H1 (cell line): ENCODE measurements at regions of chr17 and their contacts with region 1.

Region 1: DNA sequence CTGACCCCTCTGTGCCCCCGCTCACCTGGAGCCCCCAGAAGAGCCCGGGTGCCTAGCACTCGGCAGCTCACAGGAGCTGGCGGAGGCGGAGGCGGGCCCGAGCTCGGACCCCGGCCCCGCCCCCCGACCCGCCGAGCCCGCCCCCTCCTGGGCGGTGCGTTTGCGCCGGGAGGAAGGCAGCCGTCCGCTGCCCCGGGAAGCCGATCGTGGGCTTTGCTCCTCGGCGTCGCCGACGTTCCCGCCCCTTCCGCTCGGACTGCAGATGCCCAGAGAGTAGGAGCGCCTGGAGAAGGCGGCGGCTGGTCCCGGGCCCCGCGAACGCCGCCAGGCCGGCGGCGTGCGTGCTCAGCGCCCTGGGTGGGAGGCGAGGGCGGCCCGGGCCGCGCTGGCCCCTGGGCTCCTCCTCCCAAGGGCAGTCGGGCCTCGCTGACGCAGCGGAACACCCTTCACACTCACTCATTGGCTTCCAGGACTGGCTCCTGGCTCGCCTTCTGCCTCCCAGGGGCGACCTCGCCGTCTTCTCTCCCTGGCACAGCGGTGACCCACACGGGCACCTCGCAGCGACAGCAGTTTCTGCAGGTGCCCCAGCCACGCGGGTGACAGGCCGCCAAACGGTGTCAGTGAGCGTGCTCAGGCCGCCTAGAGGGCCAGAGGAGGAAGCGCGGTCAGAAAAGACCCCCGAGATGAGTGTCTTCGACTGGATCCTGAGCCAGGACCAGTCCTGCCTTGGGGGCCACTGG is at the start of gene PLSCR3:
- DNase-seq: peak in 1 of 2 experiments; percentile 93
- H3K4me3 ChIP-seq: peak within 1 kb of the TSS; percentile 69 to 83 (median 72)
- H3K27ac ChIP-seq: no peak within 1 kb of the TSS
- H3K4me1 ChIP-seq: peaks cover 0 to 9% (median 3%) of the 10 kb centered on the region in 4 experiments; a peak in 6 of 7 replicates
- H3K27me3 ChIP-seq: no peaks in the 10 kb centered on the region
- CTCF ChIP-seq: peak; percentile 40 to 57 (median 52)
- EP300 ChIP-seq: no peak
- POLR2A ChIP-seq: peak in 1 of 2 experiments; percentile 62; a peak in 1 of 3 replicates
- RAD21 ChIP-seq: 0 out of 4 replicates have a peak, but pooled peaks have one; percentile 11 to 26
- total RNA-seq, gene PLSCR3: 35.7 and 38.7 TPM in 2 replicates

Region 2: DNA sequence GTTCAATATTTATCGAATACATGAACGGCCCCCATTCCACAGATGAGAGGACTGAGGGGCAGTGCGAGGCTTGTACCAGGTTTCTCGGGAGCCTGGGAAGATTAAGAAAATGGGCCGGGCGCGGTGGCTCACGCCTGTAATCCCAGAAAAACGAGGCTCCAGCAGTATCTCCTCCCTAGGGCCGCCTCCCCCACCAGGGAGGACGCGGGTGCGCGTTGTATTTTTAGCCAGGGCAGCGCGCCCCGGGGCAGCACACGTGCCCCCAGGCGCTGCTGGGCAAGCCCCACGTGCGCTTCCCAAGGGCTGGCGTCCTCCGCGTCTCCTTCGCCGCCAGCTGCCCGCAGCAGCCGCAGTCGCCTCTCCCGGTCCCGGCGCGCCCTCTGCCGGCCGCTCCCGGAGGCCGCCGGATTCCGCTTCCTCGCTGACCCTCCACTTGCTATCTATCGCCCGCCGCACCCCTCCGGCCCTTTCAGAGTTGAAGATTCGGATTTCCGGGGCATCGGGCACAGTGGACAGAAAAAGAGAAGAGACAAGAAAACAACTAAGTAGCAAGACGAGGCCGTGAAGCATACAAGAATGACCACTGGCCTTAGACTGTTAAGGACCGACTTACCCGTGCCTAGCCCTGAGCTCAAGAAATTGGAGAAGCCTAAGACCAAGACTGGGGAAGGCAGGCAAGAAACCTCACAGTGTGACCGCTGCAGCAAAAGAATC is 98.3 kb before region 1 on chr17:
- CTCF ChIA-PET with region 1: no interaction called
- POLR2A ChIA-PET with region 1: no interaction called
- DNase-seq: peak in 1 of 2 experiments; percentile 96
- H3K4me3 ChIP-seq: peak overlapping the region in 1 of 4 experiments; percentile 51; a peak in 2 of 8 replicates
- H3K27ac ChIP-seq: no peak overlapping the region
- H3K4me1 ChIP-seq: peaks cover 0 to 14% (median 5%) of the 10 kb centered on the region in 4 experiments; a peak in 5 of 7 replicates
- H3K27me3 ChIP-seq: peaks cover 3 to 11% (median 9%) of the 10 kb centered on the region in 4 experiments
- CTCF ChIP-seq: peak; percentile 84 to 96 (median 90)
- EP300 ChIP-seq: peak in 1 of 2 experiments; percentile 83; a peak in 2 of 3 replicates
- POLR2A ChIP-seq: no peak
- RAD21 ChIP-seq: peak; percentile 93 to 95

Region 3: DNA sequence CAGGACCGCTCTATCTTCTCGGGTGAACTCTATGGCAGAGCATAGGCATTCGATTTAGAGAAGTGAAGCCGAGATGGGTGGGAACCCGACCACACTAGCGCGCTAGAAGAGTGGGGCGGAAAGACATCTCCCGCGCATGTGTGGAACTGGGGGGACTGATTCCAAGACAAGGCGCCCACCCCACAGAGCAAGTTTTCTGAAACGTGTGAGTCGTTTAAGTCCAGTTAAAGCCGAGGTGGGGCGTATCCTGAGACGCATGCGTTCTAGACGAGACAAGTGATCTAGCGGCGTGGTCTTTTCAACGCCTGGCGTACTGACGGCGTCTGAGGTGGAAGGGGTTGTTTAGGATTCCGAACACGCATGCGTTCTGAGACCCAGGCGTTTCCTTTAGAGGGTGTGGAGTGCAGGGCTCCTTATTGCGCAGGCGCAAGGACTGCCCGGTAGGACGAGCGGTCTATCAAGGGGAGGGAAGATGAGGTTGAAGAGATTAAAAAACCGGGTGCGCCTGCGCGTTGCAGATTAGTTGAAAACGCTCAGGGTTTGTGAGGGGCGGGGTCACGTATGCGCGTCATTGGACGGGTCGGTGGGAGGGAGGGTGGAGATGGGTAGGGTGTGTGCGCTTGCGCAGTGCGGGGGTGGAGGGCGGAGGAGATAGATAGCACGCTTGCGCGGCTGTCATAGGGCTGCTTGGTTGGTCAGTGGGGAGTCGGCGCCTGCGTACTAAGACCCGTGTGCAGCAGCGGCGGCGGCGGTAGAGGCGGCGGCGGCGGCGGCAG is 87.5 kb before region 1 on chr17 and contains the start of gene EIF5A:
- CTCF ChIA-PET with region 1: no interaction called
- POLR2A ChIA-PET with region 1: no interaction called
- DNase-seq: peak; percentile 99 to 100
- H3K4me3 ChIP-seq: peak within 1 kb of the TSS; percentile 87 to 97 (median 90)
- H3K27ac ChIP-seq: peak within 1 kb of the TSS; percentile 92
- H3K4me1 ChIP-seq: peaks cover 0 to 14% (median 6%) of the 10 kb centered on the region in 4 experiments; a peak in 5 of 7 replicates
- H3K27me3 ChIP-seq: no peaks in the 10 kb centered on the region
- CTCF ChIP-seq: no peak
- EP300 ChIP-seq: 0 out of 3 replicates have a peak, but pooled peaks of 1 of the 2 experiments have one; percentile 45
- POLR2A ChIP-seq: peak; percentile 39 to 62
- RAD21 ChIP-seq: no peak
- total RNA-seq, gene EIF5A: 1,158 and 1,172 TPM in 2 replicates

Region 4: DNA sequence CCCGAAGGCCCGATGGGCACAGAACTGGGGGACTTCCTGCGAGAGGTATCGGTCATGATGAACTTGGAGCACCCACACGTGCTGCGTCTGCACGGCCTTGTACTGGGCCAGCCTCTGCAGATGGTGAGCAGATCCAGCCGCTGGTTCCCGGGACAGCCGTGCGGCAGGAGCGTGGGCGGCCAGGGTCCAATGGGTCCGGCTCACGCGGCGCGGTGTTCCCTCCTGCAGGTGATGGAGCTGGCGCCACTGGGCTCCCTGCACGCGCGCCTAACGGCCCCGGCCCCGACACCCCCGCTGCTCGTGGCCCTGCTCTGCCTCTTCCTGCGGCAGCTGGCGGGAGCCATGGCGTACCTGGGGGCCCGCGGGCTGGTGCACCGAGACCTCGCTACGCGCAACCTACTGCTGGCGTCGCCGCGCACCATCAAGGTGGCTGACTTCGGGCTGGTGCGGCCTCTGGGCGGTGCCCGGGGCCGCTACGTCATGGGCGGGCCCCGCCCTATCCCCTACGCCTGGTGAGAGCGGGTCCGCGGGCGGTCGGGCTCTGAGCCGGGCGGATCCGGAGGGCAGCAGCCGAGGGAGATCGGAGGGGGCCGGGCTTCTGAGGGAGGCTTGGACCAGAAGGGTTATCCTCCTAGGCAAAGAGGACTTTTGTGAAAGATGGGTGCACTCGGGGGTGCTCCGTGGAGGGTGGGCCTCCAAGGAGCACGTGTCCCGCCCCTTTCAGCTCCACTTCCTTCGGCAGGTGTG is 10.7 kb before region 1 on chr17:
- CTCF ChIA-PET with region 1: interaction called, 9 read pairs
- POLR2A ChIA-PET with region 1: interaction called, 16 read pairs
- DNase-seq: peak in 1 of 2 experiments; percentile 92
- H3K4me3 ChIP-seq: peak overlapping the region; percentile 36 to 60 (median 46)
- H3K27ac ChIP-seq: no peak overlapping the region
- H3K4me1 ChIP-seq: peaks cover 0 to 17% (median 10%) of the 10 kb centered on the region in 4 experiments; a peak in 6 of 7 replicates
- H3K27me3 ChIP-seq: peaks cover 0 to 39% (median 29%) of the 10 kb centered on the region in 4 experiments; a peak in 6 of 7 replicates
- CTCF ChIP-seq: no peak
- EP300 ChIP-seq: no peak
- POLR2A ChIP-seq: peak in 1 of 2 experiments; percentile 28; a peak in 1 of 3 replicates
- RAD21 ChIP-seq: no peak